ENCODE measurements at regions of chr1 and their contacts with region 1.

Region 1: DNA sequence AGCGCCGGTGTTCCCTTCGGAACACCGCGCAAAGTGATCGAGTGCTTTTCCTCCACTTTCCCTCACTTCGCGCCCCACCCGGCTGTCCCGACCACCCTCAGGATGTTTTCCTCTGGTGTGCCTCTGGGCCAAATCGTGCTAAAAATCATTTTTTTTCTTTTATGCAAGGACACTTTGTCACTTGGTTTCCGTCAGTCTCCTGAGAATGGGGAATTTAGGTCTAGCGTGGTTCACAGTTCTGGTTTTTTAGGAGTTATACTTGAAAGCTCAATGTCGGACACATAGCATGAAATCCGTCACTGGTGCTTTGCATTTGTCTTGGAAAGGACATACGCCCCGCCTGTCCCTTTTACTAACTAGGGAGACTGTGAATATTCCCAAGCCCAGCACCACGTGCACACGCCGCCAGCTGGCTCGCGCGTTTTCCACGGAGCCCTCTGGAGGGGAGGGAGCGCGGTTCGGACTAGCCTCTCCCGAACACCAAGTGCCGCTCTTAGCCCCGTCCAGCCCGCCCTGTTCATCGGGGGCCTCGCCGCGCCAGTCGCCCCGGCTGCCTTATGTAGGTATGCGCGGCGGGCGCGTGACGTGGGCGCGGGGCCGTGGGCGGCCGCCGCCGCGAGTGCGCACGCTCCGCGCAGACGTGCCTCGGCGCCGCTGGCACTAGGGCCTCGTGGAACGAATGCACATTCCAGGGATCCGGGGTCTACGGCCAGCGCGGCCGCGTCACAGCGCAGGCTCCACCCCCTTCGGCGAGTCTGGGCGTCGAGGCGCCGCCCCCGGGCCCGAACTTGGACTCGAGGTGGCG is 572 bp upstream of the IRF2BP2 start:
- DNase-seq: peak; percentile 90 to 93 (median 91)
- H3K4me3 ChIP-seq: peak overlapping the region; percentile 67 to 72
- H3K4me3 Mint-ChIP-seq: peak overlapping the region; percentile 88 to 95 (median 94)
- H3K27ac ChIP-seq: peak overlapping the region; percentile 92
- H3K27ac Mint-ChIP-seq: peak overlapping the region; percentile 98 to 100 (median 99)
- H3K4me1 ChIP-seq: peaks cover 47% of the 10 kb centered on the region
- H3K4me1 Mint-ChIP-seq: peaks cover 34 to 65% (median 47%) of the 10 kb centered on the region in 4 donors
- H3K27me3 ChIP-seq: no peaks in the 10 kb centered on the region
- H3K27me3 Mint-ChIP-seq: peaks cover 0 to 6% of the 10 kb centered on the region in 2 donors

Region 2: DNA sequence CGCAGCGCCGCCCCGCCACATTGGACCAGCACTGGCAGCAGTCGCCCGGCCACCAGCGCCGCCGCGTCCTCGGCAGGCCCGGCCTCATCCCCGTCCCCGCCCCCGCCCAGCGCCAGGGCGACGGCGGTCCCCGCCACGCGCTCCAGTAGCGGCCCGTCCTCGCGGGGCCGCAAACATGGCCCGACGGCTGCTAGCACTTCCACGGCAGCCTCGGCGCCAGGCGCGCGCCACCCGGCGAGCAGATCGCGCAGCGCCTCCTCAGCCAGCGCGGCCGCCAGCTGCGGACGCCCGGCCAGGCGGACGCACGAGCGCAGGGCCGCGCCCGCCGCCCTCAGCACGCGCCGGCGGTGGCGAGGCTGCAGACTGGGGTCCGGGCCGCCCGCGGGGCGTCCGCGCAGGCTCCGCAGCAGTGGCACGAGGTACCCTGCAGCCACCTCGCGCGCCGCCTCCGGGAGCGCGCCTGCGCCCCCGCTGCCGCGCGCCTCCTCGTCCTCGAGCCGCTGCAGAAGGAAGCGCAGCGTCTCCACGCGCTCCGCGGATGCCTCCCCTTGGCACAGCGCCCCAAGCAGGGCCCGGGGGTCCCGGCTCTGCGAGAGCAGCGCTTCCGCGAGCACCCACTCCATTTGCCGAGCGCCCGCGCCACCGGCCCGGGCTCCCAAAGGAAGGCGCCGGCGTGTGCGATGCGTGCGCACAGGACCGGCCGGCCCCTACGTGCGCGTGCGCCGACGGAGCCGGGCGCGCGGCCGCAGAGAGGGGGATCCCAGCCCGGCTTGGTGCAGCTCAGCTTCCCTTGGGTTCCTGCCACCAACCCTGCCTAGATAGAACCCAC is 131.9 kb before region 1 on chr1 and contains the start of gene TARBP1:
- CTCF ChIA-PET with region 1: no interaction called
- POLR2A ChIA-PET with region 1: interaction called, 20 read pairs
- intact Hi-C with region 1: loop called (anchors 1 kb)
- DNase-seq: peak; percentile 73 to 83 (median 82)
- H3K4me3 ChIP-seq: peak within 1 kb of the TSS; percentile 47 to 63
- H3K4me3 Mint-ChIP-seq: peak within 1 kb of the TSS; percentile 87 to 93 (median 90)
- H3K27ac ChIP-seq: peak within 1 kb of the TSS; percentile 42
- H3K27ac Mint-ChIP-seq: peak within 1 kb of the TSS; percentile 57 to 96 (median 89)
- H3K4me1 ChIP-seq: peaks cover 29% of the 10 kb centered on the region
- H3K4me1 Mint-ChIP-seq: peaks cover 15 to 44% (median 27%) of the 10 kb centered on the region in 4 donors
- H3K27me3 ChIP-seq: no peaks in the 10 kb centered on the region
- H3K27me3 Mint-ChIP-seq: peaks cover 5 to 9% of the 10 kb centered on the region in 2 donors
- total RNA-seq, gene TARBP1: 25.8 to 27.5 TPM

Region 3: DNA sequence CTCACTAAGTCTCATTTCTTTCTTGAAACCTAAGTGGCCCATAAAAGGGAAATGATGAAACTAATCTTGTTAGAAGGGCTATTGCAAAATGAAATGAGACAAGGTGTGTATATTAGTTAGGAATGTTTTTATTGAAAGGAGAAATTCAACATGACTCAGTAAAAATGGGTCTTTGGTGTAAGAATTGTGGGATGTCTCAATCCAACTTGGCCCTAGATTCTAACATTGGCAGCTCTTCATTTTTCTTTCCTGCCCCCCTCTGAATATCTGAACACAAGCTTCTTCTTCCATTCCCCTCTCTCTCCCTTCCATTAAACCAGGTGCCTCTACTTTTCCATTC is 104.8 kb before region 1 on chr1:
- CTCF ChIA-PET with region 1: no interaction called
- POLR2A ChIA-PET with region 1: no interaction called
- intact Hi-C with region 1: no loop called
- DNase-seq: no peak
- H3K4me3 ChIP-seq: no peak overlapping the region
- H3K4me3 Mint-ChIP-seq: no peak overlapping the region
- H3K27ac ChIP-seq: no peak overlapping the region
- H3K27ac Mint-ChIP-seq: no peak overlapping the region
- H3K4me1 ChIP-seq: no peaks in the 10 kb centered on the region
- H3K4me1 Mint-ChIP-seq: no peaks in the 10 kb centered on the region
- H3K27me3 ChIP-seq: no peaks in the 10 kb centered on the region
- H3K27me3 Mint-ChIP-seq: peaks cover 0 to 5% of the 10 kb centered on the region in 2 donors

Region 4: GRCh38 chr1:234676103-234676594 is 65.6 kb after region 1 on chr1:
- CTCF ChIA-PET with region 1: interaction called, 3 read pairs
- POLR2A ChIA-PET with region 1: interaction called, 3 read pairs
- intact Hi-C with region 1: loop called (anchors 1 kb)
- DNase-seq: peak; percentile 38 to 56 (median 40)
- H3K4me3 ChIP-seq: peak overlapping the region in 1 of 2 donors; percentile 31
- H3K4me3 Mint-ChIP-seq: peak overlapping the region; percentile 74 to 85 (median 80)
- H3K27ac ChIP-seq: no peak overlapping the region
- H3K27ac Mint-ChIP-seq: peak overlapping the region in 5 of 7 donors; percentile 48 to 87 (median 68)
- H3K4me1 ChIP-seq: peaks cover 7% of the 10 kb centered on the region
- H3K4me1 Mint-ChIP-seq: peaks cover 8 to 12% (median 9%) of the 10 kb centered on the region in 4 donors
- H3K27me3 ChIP-seq: no peaks in the 10 kb centered on the region
- H3K27me3 Mint-ChIP-seq: no peaks in the 10 kb centered on the region

Region 5: DNA sequence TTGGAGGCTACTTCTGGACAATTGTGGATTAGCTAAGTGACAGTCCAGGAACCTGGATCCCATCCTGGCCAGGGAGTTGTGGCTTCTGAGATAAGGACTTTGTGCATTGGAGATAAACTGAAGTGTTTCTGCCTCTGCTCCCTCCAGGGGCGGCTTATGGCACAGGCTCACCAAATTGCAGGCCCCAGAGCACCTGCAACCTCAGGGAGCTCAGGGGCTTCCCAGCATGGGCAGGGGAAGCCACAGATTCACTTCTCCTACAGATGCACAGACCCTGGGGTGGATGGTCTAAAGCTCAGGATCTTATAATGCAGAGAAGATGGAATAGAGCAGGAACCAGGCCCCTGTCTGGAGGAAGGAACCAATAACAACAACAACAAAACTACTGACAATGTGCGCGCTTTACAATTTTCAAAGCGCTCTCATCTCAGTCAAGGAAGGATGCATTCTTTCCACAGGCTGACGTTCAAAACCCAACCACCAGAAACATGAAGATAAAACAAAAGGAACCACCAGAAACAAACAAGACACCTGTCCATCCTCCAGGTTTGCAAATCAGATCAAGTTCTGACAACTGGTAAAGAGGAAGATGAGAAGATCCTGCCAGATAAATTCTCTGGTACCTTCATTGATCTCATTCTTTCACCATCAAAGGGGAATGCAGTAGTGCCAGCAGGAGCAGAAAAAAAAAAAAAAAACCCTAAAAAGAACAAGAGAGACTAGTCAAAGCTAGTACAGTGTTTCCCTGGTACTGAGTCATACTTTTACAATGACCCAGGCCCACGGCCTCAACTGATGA is 120.4 kb after region 1 on chr1:
- CTCF ChIA-PET with region 1: interaction called, 39 read pairs
- POLR2A ChIA-PET with region 1: interaction called, 272 read pairs
- intact Hi-C with region 1: no loop called
- DNase-seq: peak; percentile 78 to 87 (median 79)
- H3K4me3 ChIP-seq: no peak overlapping the region
- H3K4me3 Mint-ChIP-seq: peak overlapping the region; percentile 21 to 73 (median 62)
- H3K27ac ChIP-seq: peak overlapping the region; percentile 60
- H3K27ac Mint-ChIP-seq: peak overlapping the region; percentile 86 to 98 (median 93)
- H3K4me1 ChIP-seq: peaks cover 70% of the 10 kb centered on the region
- H3K4me1 Mint-ChIP-seq: peaks cover 30 to 69% (median 57%) of the 10 kb centered on the region in 4 donors
- H3K27me3 ChIP-seq: no peaks in the 10 kb centered on the region
- H3K27me3 Mint-ChIP-seq: no peaks in the 10 kb centered on the region

Region 6: GRCh38 chr1:234842726-234843641 is 232.4 kb after region 1 on chr1:
- CTCF ChIA-PET with region 1: interaction called, 13 read pairs
- POLR2A ChIA-PET with region 1: interaction called, 36 read pairs
- intact Hi-C with region 1: loop called (anchors 1 kb)
- DNase-seq: peak; percentile 34 to 76 (median 44)
- H3K4me3 ChIP-seq: peak overlapping the region in 1 of 2 donors; percentile 28
- H3K4me3 Mint-ChIP-seq: peak overlapping the region; percentile 33 to 83 (median 58)
- H3K27ac ChIP-seq: peak overlapping the region; percentile 39
- H3K27ac Mint-ChIP-seq: peak overlapping the region; percentile 76 to 91 (median 83)
- H3K4me1 ChIP-seq: peaks cover 65% of the 10 kb centered on the region
- H3K4me1 Mint-ChIP-seq: peaks cover 47 to 73% (median 60%) of the 10 kb centered on the region in 4 donors
- H3K27me3 ChIP-seq: no peaks in the 10 kb centered on the region
- H3K27me3 Mint-ChIP-seq: no peaks in the 10 kb centered on the region

Region 7: DNA sequence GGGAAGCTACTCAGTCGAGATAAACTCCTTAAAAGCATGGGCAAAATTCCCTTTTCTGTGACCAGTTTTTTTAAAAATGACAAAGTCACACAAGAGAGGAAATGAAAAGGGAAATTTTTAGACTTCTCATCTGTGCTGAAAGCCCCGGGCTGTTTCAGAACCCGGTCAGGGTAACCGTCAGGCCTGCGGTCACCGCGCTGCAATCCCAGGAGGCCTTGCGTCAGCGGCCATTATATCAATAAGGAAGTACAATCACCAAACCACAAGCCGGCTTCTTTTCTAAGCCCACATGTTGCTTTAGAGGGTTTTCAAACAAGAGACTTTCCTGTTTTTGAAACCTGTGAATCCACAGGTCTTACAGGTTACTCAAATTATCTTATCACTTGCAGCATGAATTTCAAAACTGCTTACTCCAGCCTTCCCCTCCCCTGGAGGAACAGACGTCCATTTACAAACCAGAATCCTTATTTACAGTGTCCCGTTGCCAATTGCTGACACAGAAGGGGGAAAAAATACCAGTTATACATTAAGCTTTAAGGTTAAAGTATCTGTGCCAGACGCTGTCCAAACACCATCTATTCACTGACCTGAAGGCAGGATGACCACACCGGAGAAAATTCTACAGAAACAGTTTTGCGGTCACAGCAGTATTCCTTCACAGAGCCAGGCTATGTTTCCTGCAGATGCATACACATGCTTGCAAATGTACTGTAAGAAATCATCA is 352.8 kb after region 1 on chr1:
- CTCF ChIA-PET with region 1: interaction called, 4 read pairs
- POLR2A ChIA-PET with region 1: interaction called, 26 read pairs
- intact Hi-C with region 1: loop called (anchors 1 kb)
- DNase-seq: peak; percentile 85 to 94 (median 86)
- H3K4me3 ChIP-seq: peak overlapping the region; percentile 14 to 46
- H3K4me3 Mint-ChIP-seq: peak overlapping the region; percentile 41 to 89 (median 84)
- H3K27ac ChIP-seq: peak overlapping the region; percentile 89
- H3K27ac Mint-ChIP-seq: peak overlapping the region; percentile 90 to 98 (median 96)
- H3K4me1 ChIP-seq: peaks cover 72% of the 10 kb centered on the region
- H3K4me1 Mint-ChIP-seq: peaks cover 58 to 76% (median 64%) of the 10 kb centered on the region in 4 donors
- H3K27me3 ChIP-seq: no peaks in the 10 kb centered on the region
- H3K27me3 Mint-ChIP-seq: no peaks in the 10 kb centered on the region

Region 8: GRCh38 chr1:235011599-235012435 is 401.3 kb after region 1 on chr1:
- CTCF ChIA-PET with region 1: interaction called, 3 read pairs
- POLR2A ChIA-PET with region 1: interaction called, 63 read pairs
- intact Hi-C with region 1: loop called (anchors 2 kb)
- DNase-seq: peak; percentile 93 to 99 (median 97)
- H3K4me3 ChIP-seq: peak overlapping the region in 1 of 2 donors; percentile 61
- H3K4me3 Mint-ChIP-seq: peak overlapping the region; percentile 75 to 90 (median 82)
- H3K27ac ChIP-seq: peak overlapping the region; percentile 91
- H3K27ac Mint-ChIP-seq: peak overlapping the region; percentile 93 to 99 (median 99)
- H3K4me1 ChIP-seq: peaks cover 45% of the 10 kb centered on the region
- H3K4me1 Mint-ChIP-seq: peaks cover 43 to 73% (median 58%) of the 10 kb centered on the region in 4 donors
- H3K27me3 ChIP-seq: no peaks in the 10 kb centered on the region
- H3K27me3 Mint-ChIP-seq: no peaks in the 10 kb centered on the region

Measured in CD4-positive, alpha-beta memory T cell (primary cell).